HepG2 (cell line): ENCODE measurements at regions of chr17 and their contacts with region 1.

Region 1: DNA sequence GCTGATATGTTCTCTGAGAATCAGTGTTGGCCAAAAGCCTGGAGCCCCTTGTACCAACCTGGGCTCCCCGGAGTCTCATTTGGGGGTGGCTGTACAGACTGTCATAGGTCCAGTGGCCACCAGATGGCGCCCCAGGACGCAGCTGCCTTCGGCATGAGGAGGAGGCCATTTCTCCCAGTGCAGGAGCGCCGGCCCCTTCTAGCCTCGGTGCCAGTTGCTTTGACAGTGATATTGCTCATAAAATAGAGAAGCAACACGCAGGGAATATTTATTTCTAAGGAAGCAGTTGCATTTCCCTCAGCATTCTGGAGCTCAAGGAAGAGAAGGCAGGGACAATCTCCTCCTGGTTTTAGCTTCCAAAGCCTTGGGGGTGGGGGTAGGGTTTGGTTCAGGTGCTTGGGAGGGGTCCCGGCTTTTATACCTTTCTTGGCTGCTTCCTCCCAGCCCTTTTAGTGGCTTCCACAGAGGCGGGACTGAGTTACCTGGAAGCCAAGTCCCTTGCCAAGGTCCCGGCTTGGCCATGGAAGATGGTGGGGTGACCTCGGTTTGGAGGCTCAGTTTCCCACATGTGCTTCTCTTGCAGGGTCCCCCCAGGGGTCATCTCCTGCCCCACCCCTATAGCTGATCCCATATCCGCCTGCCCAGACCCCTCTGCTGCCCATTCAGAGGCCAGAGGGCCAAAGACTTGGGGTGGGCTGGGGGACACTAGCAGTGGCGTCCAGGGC is 117.8 kb upstream of the CDC42EP4 start:
- DNase-seq: peak; percentile 59
- ATAC-seq: peak; percentile 95
- H3K4me3 ChIP-seq: no peak overlapping the region
- H3K27ac ChIP-seq: no peak overlapping the region
- H3K4me1 ChIP-seq: peaks cover 7% of the 10 kb centered on the region; the same call in 1 of the 2 replicates
- H3K27me3 ChIP-seq: peaks cover 8 to 56% of the 10 kb centered on the region in 2 experiments
- CTCF ChIP-seq: peak; percentile 96
- EP300 ChIP-seq: no peak
- POLR2A ChIP-seq: no peak
- RAD21 ChIP-seq: peak; percentile 90

Region 2: DNA sequence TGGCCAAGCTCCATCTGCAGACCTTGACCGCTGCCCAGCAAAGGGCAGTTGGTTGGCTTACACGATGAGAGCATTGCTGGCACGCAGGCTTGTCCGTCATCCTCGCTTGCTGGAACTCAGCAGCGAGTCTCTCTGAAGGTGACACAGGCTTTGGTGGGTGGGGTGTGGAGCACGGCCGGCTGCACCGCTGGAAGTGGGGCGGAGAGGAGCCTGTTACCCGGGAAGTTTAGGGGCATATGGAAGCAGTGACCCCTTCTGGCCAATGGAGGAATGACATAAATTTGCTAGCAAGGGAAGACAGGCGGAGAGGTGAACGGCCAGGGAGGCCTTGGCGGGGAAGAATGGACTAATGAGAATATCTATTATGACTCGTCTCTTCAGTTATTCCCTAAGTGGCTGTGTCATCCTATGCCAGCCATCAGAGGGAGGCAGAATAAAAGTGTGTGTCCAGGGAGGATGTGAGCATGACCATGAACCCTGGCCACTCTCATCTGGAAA is 280.5 kb after region 1 on chr17:
- CTCF ChIA-PET with region 1: interaction called, 21 read pairs
- POLR2A ChIA-PET with region 1: no interaction called
- in situ Hi-C with region 1: loop called (anchors 10 kb)
- intact Hi-C with region 1: no loop called
- DNase-seq: peak; percentile 54
- ATAC-seq: peak; percentile 85
- H3K4me3 ChIP-seq: no peak overlapping the region
- H3K27ac ChIP-seq: no peak overlapping the region
- H3K4me1 ChIP-seq: no peaks in the 10 kb centered on the region
- H3K27me3 ChIP-seq: peaks cover 0 to 30% of the 10 kb centered on the region in 2 experiments; a peak in 4 of 5 replicates
- CTCF ChIP-seq: peak; percentile 90
- EP300 ChIP-seq: no peak
- POLR2A ChIP-seq: no peak
- RAD21 ChIP-seq: peak; percentile 75

Region 3: GRCh38 chr17:74176546-74177001 is 747.0 kb after region 1 on chr17:
- CTCF ChIA-PET with region 1: interaction called, 9 read pairs
- POLR2A ChIA-PET with region 1: no interaction called
- in situ Hi-C with region 1: loop called (anchors 10 kb)
- intact Hi-C with region 1: loop called (anchors 2 kb)
- DNase-seq: peak; percentile 60
- ATAC-seq: peak; percentile 94
- H3K4me3 ChIP-seq: no peak overlapping the region
- H3K27ac ChIP-seq: no peak overlapping the region
- H3K4me1 ChIP-seq: no peaks in the 10 kb centered on the region
- H3K27me3 ChIP-seq: peaks cover 7 to 41% of the 10 kb centered on the region in 2 experiments; a peak in 4 of 5 replicates
- CTCF ChIP-seq: peak; percentile 90
- EP300 ChIP-seq: no peak
- POLR2A ChIP-seq: no peak
- RAD21 ChIP-seq: peak; percentile 70

Region 4: DNA sequence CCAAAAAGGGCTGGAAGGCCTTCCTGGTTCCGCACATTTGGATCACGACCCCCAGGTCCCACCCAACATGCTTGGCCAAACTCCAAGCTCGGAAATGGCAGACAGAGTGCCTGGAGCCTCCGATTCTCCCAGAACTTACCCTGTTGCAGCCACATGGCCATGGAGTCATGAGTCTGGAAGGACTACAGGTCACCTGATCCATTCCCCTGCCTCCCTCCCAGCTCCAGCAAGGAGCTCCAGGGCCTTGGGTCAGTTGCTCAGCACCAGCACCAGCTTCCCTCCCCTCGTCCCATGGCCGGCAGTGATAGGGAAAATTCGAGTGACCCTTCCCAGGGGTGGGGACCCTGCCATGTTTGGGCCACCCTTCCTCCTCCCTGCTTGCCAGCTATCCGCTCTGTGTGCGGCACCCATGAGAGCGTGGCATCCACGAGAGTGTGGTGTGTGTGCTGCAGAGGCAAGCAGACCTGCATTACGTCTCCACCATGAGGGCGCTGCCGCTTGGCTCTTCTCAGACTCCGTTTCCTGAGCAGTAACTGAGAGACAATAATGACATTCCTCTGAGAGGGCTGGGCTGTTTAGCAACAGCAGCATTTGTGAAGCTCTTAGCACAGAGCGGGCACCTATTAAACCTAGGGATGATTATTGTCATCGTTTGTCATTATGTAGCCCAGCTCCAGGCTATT is 752.6 kb after region 1 on chr17:
- CTCF ChIA-PET with region 1: interaction called, 9 read pairs
- POLR2A ChIA-PET with region 1: no interaction called
- in situ Hi-C with region 1: loop called (anchors 10 kb)
- intact Hi-C with region 1: loop called (anchors 2 kb)
- DNase-seq: no peak
- ATAC-seq: no peak
- H3K4me3 ChIP-seq: no peak overlapping the region
- H3K27ac ChIP-seq: no peak overlapping the region
- H3K4me1 ChIP-seq: no peaks in the 10 kb centered on the region
- H3K27me3 ChIP-seq: peaks cover 5 to 55% of the 10 kb centered on the region in 2 experiments; a peak in 3 of 5 replicates
- CTCF ChIP-seq: no peak
- EP300 ChIP-seq: no peak
- POLR2A ChIP-seq: no peak
- RAD21 ChIP-seq: no peak